Heart left ventricle (tissue), 16 donors: ENCODE measurements at regions of chr3 and their contacts with region 1.

Region 1: GRCh38 chr3:37453393-37454389 is 279.3 kb upstream of the LRRFIP2 start:
- DNase-seq: peak; percentile 76 to 90 (median 83)
- ATAC-seq: peak; percentile 68 to 72 (median 70)
- H3K4me3 ChIP-seq: peak overlapping the region; percentile 72 to 94 (median 85)
- H3K27ac ChIP-seq: peak overlapping the region; percentile 88 to 99 (median 94)
- H3K4me1 ChIP-seq: peaks cover 16 to 70% (median 57%) of the 10 kb centered on the region in 12 donors
- H3K27me3 ChIP-seq: peaks cover 0 to 12% (median 0%) of the 10 kb centered on the region in 9 donors
- CTCF ChIP-seq: peak; percentile 14 to 69 (median 51)
- POLR2A ChIP-seq: peak in 1 of 2 donors; percentile 37

Region 2: DNA sequence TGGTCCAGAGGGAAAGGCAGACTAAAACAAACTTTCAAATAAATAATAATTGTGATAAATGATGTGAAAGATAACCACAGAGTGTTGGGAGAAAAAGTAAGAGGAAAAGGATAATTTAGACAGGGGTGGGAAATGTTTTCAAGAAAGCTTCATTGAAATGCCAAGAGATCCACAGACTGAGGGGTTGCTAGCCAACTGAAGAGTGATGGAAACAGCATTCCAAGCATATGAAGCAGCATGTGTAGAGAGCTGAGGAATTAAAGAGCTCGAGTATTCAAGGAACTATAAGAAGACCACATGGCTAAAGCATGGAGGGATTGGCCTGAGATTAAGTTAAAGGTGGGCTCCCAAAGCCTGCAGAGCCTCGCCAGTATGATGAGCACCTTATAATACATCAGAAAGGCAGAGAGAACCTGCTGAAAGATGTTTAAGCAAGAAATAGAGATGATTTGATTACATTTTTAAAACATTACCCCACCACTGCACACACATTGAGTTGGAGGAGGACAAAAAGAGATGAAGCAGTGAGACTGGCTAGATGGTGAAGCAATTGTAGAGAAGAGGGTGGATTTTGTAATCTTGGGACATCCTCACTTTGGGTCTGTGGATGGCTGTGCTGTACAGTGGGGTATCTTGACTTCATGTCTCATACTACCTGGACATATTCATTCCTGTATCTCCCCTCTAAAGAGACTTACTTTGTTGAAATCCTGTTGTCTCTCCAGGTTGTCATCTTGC is 972.6 kb before region 1 on chr3:
- intact Hi-C with region 1: no loop called
- DNase-seq: no peak
- ATAC-seq: no peak
- H3K4me3 ChIP-seq: no peak overlapping the region
- H3K27ac ChIP-seq: no peak overlapping the region
- H3K4me1 ChIP-seq: no peaks in the 10 kb centered on the region
- H3K27me3 ChIP-seq: no peaks in the 10 kb centered on the region
- CTCF ChIP-seq: no peak
- POLR2A ChIP-seq: no peak

Region 3: DNA sequence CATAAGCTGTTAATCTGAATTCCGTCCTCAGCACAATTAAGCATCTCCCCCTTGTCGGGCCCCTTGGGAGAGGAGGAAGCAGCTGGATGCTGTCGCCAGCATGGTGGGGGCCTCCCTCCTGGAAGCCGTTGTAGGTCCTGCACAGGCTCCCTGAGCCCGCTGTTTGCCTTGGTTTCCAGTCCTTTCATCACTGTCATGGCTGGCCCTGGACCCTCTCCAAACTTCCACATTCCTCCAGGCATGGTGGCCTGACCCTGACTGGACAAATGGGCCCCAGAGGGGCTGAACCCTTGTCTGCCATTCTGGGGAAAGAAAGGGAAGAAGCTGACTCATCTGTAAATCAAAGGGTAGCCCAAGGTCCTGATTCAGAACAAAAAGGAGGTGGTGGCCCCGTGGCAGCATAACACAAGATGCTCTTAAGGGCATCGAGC is 21.2 kb after region 1 on chr3:
- intact Hi-C with region 1: loop called in 1 of 10 experiments (anchors 2 kb)
- DNase-seq: no peak
- ATAC-seq: peak in 2 of 4 donors; percentile 11 to 28
- H3K4me3 ChIP-seq: no peak overlapping the region
- H3K27ac ChIP-seq: peak overlapping the region in 1 of 12 donors; percentile 9
- H3K4me1 ChIP-seq: peaks cover 0 to 26% (median under 1%) of the 10 kb centered on the region in 12 donors
- H3K27me3 ChIP-seq: no peaks in the 10 kb centered on the region
- CTCF ChIP-seq: no peak
- POLR2A ChIP-seq: no peak

Region 4: DNA sequence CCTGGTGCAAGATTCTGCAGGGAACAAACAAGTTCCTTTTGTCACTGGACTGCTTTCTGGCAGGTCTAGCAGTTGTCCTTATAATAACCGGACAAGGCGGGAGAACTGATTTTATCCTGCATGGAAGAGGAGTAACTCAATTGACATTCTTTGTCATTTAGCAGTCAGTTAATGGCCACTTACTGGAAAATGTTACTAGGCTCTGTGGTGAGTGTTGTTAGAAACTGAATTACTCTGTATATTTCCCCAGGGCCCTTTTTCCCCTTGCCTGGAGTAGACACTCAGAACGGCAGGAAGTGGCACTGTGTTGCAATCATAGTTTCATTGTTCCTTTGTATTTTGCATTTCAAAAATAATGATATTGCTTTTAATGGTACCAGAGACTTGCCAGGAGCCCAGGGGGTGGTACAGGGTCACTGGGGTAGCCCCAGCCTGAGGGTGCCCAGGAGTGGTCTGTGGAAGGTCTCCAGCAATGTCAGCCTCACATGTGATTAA is 39.3 kb after region 1 on chr3:
- intact Hi-C with region 1: loop called in 8 of 10 experiments (anchors 2 to 5 kb)
- DNase-seq: peak in 3 of 5 donors; percentile 33 to 53 (median 38)
- ATAC-seq: peak; percentile 46 to 81 (median 72)
- H3K4me3 ChIP-seq: no peak overlapping the region
- H3K27ac ChIP-seq: peak overlapping the region in 11 of 12 donors; percentile 52 to 86 (median 74)
- H3K4me1 ChIP-seq: peaks cover 16 to 69% (median 44%) of the 10 kb centered on the region in 12 donors
- H3K27me3 ChIP-seq: no peaks in the 10 kb centered on the region
- CTCF ChIP-seq: no peak
- POLR2A ChIP-seq: no peak

Region 5: GRCh38 chr3:37498126-37499039 is 44.7 kb after region 1 on chr3:
- intact Hi-C with region 1: loop called in 8 of 10 experiments (anchors 2 to 5 kb)
- DNase-seq: peak in 2 of 5 donors; percentile 55 to 73
- ATAC-seq: peak; percentile 69 to 79 (median 76)
- H3K4me3 ChIP-seq: no peak overlapping the region
- H3K27ac ChIP-seq: peak overlapping the region in 10 of 12 donors; percentile 6 to 81 (median 56)
- H3K4me1 ChIP-seq: peaks cover under 1 to 72% (median 43%) of the 10 kb centered on the region in 12 donors
- H3K27me3 ChIP-seq: no peaks in the 10 kb centered on the region
- CTCF ChIP-seq: no peak
- POLR2A ChIP-seq: peak in 1 of 2 donors; percentile 17

Region 6: DNA sequence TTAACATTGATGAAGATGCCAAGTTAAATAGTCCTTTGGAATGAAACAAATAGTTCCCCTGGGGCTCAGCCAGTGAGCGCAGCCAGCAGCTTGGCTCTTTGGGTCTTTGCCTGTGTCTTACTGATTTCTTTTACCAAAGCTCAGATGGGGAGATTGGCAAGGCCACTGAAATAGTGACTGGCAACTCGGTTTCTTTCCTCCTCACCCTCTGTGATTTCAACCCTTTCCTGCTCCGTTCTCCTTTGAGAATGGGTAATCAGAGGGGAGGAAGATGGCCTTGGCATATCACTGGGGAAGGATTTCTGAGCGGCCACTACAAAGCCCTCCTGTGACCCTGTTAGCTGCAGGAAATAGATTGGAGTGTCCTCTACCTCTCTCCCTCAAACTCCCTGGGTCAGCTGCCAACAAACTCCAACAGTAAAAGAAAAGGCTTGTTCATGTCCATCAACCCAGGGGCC is 57.8 kb after region 1 on chr3:
- intact Hi-C with region 1: loop called in 1 of 10 experiments (anchors 5 kb)
- DNase-seq: peak in 4 of 5 donors; percentile 46 to 67 (median 58)
- ATAC-seq: peak in 3 of 4 donors; percentile 48 to 67 (median 56)
- H3K4me3 ChIP-seq: no peak overlapping the region
- H3K27ac ChIP-seq: peak overlapping the region; percentile 69 to 90 (median 82)
- H3K4me1 ChIP-seq: peaks cover 5 to 68% (median 45%) of the 10 kb centered on the region in 12 donors
- H3K27me3 ChIP-seq: no peaks in the 10 kb centered on the region
- CTCF ChIP-seq: no peak
- POLR2A ChIP-seq: no peak

Region 7: GRCh38 chr3:37531066-37531720 is 77.5 kb after region 1 on chr3:
- intact Hi-C with region 1: loop called in 1 of 10 experiments (anchors 5 kb)
- DNase-seq: peak in 1 of 5 donors; percentile 53
- ATAC-seq: peak in 3 of 4 donors; percentile 30 to 59 (median 53)
- H3K4me3 ChIP-seq: no peak overlapping the region
- H3K27ac ChIP-seq: peak overlapping the region in 8 of 12 donors; percentile 9 to 69 (median 31)
- H3K4me1 ChIP-seq: peaks cover 0 to 44% (median 21%) of the 10 kb centered on the region in 12 donors
- H3K27me3 ChIP-seq: no peaks in the 10 kb centered on the region
- CTCF ChIP-seq: no peak
- POLR2A ChIP-seq: no peak

Region 8: GRCh38 chr3:37546905-37547304 is 93.2 kb after region 1 on chr3:
- intact Hi-C with region 1: loop called in 1 of 10 experiments (anchors 1 kb)
- DNase-seq: peak in 3 of 5 donors; percentile 59 to 68 (median 59)
- ATAC-seq: peak; percentile 77 to 86 (median 84)
- H3K4me3 ChIP-seq: no peak overlapping the region
- H3K27ac ChIP-seq: peak overlapping the region in 8 of 12 donors; percentile 35 to 79 (median 61)
- H3K4me1 ChIP-seq: peaks cover 0 to 51% (median 26%) of the 10 kb centered on the region in 12 donors
- H3K27me3 ChIP-seq: no peaks in the 10 kb centered on the region
- CTCF ChIP-seq: peak; percentile 11 to 59 (median 40)
- POLR2A ChIP-seq: no peak

Region 9: GRCh38 chr3:37964716-37965115 is 511.0 kb after region 1 on chr3:
- intact Hi-C with region 1: no loop called
- DNase-seq: no peak
- ATAC-seq: no peak
- H3K4me3 ChIP-seq: no peak overlapping the region
- H3K27ac ChIP-seq: no peak overlapping the region
- H3K4me1 ChIP-seq: peaks cover 0 to 55% (median 34%) of the 10 kb centered on the region in 12 donors
- H3K27me3 ChIP-seq: no peaks in the 10 kb centered on the region
- CTCF ChIP-seq: no peak
- POLR2A ChIP-seq: no peak